Activated T-helper 2 cell treated with anti-CD3 and anti-CD28 coated beads, Interferon-gamma antibody, Interleukin-2, Interleukin-4, amounts not matched to agents 10 μg/mL and 5 μg/mL and 100 μg/mL, durations not matched to agents 14 hours and 24 hours and 36 hours (primary cell): ENCODE measurements at regions of chr4 and their contacts with region 1.

Region 1: GRCh38 chr4:76515975-76516843 is 81.2 kb downstream of the SHROOM3 start:
- DNase-seq: no peak
- H3K4me3 Mint-ChIP-seq: no peak overlapping the region
- H3K27ac Mint-ChIP-seq: no peak overlapping the region
- H3K4me1 Mint-ChIP-seq: no peaks in the 10 kb centered on the region
- H3K27me3 Mint-ChIP-seq: peaks cover 5% of the 10 kb centered on the region

Region 2: GRCh38 chr4:76758290-76758882 is 242.2 kb after region 1 on chr4:
- intact Hi-C with region 1: loop called (anchors 5 kb)
- DNase-seq: no peak
- H3K4me3 Mint-ChIP-seq: no peak overlapping the region
- H3K27ac Mint-ChIP-seq: no peak overlapping the region
- H3K4me1 Mint-ChIP-seq: peaks cover 3% of the 10 kb centered on the region
- H3K27me3 Mint-ChIP-seq: peaks cover 21% of the 10 kb centered on the region